Right lobe of liver (tissue), 6 donors: ENCODE measurements at regions of chr11 and their contacts with region 1.

Region 1: GRCh38 chr11:34926101-34926830 is 9.8 kb downstream of the PDHX start:
- DNase-seq: no peak
- ATAC-seq: peak; percentile 66 to 80 (median 76)
- H3K4me3 ChIP-seq: no peak overlapping the region
- H3K27ac ChIP-seq: no peak overlapping the region
- H3K4me1 ChIP-seq: peaks cover 0 to 52% (median 8%) of the 10 kb centered on the region in 4 donors
- H3K27me3 ChIP-seq: no peaks in the 10 kb centered on the region
- CTCF ChIP-seq: peak; percentile 62 to 83 (median 74)
- POLR2A ChIP-seq: no peak

Region 2: DNA sequence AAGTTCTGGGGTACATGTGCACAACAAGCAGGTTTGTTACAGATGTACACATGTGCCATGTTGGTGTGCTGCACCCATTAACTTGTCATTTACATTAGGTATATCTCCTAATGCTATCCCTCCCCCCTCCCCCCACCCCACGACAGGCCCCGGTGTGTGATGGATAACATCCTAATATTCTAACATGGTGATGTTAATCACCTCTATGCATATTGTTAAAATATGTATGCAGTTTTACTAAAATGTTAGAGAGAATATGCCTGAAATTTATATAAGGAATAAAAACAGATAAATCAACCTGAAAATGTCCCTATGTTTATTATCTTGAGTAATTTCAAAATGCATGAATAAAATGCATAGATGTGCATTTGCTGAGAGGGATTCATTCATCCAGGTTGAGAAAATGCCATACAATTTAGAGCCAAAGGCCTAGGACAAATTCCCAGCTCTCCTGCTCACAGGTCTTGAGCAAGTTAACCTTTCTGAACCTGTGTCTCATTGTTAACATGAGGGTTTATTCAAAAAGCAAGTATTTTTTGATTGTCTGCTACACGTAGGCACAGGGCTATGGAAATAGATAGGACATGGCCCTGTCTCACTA is 48.8 kb before region 1 on chr11:
- intact Hi-C with region 1: no loop called
- DNase-seq: no peak
- ATAC-seq: no peak
- H3K4me3 ChIP-seq: no peak overlapping the region
- H3K27ac ChIP-seq: no peak overlapping the region
- H3K4me1 ChIP-seq: peaks cover 0 to 7% (median 0%) of the 10 kb centered on the region in 4 donors
- H3K27me3 ChIP-seq: no peaks in the 10 kb centered on the region
- CTCF ChIP-seq: no peak
- POLR2A ChIP-seq: no peak

Region 3: DNA sequence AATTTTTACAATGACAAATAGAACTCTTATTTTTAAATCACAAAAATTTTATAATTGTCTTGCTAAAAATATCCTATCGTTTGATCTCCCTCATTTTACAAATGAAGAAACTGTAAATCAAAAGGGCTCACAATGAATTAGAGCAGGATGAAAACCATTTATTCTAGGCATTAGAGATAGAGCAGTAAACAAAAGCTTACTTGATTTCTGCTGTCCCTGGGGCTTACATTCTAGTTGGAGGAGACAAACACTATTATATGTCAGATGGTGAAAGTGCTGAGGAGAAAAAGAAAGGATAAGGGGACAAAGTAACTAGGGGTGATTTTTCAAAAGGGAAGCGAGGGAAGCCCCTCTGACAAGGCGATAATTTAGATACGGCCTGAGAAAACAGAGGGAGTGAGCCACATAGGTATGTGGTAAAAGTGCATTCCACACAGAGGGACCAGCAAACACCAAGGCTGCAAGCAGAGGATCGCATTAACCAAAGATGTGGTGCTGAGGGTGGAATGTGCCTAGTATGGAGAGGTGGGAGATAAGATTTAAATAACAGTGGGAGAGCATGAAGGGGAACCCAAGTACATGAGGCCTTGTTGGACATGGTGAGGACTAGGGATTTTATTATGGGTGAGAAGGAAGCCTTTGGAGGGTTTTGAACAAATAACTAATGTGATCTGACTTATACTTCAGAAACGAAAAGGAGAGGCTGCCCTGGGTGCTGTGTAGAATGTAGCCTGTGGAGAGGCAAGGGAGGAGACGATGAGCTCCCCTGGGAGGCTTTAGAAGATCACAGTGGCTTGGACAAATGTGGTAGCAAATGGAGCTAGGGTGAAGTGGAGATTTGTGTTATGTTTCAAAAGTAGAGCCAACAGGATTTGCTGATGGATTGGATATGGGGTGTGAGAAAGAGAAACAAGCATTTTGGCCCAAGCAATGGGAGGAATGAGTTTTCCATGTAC is 52.2 kb after region 1 on chr11:
- intact Hi-C with region 1: no loop called
- DNase-seq: no peak
- ATAC-seq: no peak
- H3K4me3 ChIP-seq: no peak overlapping the region
- H3K27ac ChIP-seq: no peak overlapping the region
- H3K4me1 ChIP-seq: no peaks in the 10 kb centered on the region
- H3K27me3 ChIP-seq: no peaks in the 10 kb centered on the region
- CTCF ChIP-seq: no peak
- POLR2A ChIP-seq: no peak

Region 4: DNA sequence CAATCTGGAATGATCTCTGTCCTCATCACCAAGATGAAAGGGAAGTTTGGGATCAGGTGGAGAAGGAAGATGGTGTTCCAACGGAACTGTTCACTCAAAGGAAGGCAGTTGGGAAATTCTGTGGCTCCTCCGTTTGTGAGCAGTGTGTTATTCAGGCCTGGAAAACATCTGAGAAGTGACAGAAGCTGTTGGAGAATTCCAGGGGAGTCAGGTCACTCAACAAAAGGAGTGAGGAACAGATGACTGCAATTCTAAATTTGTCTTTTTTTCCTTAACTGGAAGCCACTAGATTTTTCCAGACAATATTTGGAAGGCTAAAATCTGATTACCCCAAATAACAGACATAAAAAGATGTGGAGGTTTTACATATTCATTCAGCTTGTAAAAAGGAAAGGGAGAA is 320.5 kb after region 1 on chr11:
- intact Hi-C with region 1: loop called in 1 of 2 experiments (anchors 10 kb)
- DNase-seq: no peak
- ATAC-seq: peak in 1 of 4 donors; percentile 22
- H3K4me3 ChIP-seq: no peak overlapping the region
- H3K27ac ChIP-seq: no peak overlapping the region
- H3K4me1 ChIP-seq: no peaks in the 10 kb centered on the region
- H3K27me3 ChIP-seq: no peaks in the 10 kb centered on the region
- CTCF ChIP-seq: no peak
- POLR2A ChIP-seq: no peak

Region 5: DNA sequence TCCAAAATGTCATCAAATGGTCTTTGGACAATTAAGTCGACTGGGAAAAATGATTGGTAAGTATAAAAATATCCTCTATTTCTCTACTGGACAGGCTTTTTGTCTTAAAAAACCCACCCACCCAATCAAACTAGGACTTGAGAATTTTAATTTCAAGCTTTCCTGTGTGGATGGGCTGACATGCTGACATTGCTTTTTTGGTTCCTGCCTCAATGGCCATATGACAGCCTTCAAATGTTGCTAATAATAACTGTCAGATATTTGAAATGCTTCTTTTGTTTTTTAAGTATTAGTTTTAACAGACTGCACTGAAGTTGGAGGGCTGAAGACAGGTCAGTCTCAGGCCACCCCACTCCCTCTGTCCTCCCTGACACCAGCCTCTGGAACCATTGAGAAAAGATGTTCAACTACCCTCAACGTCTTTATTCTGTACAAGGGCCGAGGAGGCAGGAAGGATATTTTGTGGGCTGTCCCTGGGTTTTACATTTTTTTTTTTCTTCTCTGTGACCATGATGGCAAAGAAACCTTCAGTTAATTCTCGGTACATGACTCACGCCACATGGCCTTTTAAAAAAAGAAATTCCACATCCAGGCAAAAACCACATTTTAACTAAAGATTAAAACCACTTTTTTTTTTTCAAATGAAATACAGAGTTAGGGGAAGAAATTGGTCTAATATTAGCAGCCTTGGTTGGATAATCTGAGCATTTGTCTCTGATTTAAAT is 362.7 kb after region 1 on chr11:
- intact Hi-C with region 1: no loop called
- DNase-seq: no peak
- ATAC-seq: no peak
- H3K4me3 ChIP-seq: no peak overlapping the region
- H3K27ac ChIP-seq: no peak overlapping the region
- H3K4me1 ChIP-seq: no peaks in the 10 kb centered on the region
- H3K27me3 ChIP-seq: no peaks in the 10 kb centered on the region
- CTCF ChIP-seq: no peak
- POLR2A ChIP-seq: no peak